ENCODE measurements at regions of chr10 and their contacts with region 1.

Region 1: DNA sequence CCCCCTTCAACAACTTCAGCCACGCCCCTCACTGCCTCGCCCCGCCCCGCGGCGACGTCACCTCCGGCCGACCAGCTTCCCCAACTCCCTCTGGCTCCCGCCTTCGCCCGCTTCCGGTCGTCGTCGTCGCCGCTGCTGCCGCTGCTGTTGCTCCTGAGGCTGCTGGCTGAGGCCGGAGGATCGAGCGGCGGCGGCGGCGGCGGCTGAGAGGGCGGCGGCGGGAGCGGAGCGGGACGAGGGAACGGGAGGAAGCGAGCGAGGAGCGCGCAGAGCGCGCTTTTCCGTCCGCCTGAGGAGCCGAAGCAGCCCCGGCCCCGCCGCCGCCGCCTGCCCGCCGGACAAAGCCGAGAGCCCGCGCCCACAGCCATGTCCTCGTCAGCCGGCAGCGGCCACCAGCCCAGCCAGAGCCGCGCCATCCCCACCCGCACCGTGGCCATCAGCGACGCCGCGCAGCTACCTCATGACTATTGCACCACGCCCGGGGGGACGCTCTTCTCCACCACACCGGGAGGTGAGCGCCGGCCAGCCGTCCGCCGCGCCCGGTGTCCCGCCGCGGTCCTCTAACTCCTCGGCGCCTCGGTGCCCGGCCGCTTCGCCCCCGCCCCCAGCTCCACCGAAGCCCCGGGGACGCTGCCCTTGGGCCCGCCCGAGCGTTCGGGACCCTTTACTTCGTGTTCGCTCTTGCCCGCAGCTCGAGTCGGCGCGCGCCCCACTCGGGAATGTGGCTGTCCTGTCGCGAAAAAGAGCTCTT is at the start of gene EIF4EBP2:
- DNase-seq: peak; percentile 97 to 99 (median 98)
- ATAC-seq: peak; percentile 93 to 96 (median 94)
- H3K4me3 ChIP-seq: peak within 1 kb of the TSS; percentile 61 to 99 (median 89)
- H3K27ac ChIP-seq: peak within 1 kb of the TSS; percentile 92 to 100 (median 98)
- H3K4me1 ChIP-seq: peaks cover 9 to 42% (median 28%) of the 10 kb centered on the region in 12 donors
- H3K27me3 ChIP-seq: no peaks in the 10 kb centered on the region
- CTCF ChIP-seq: peak in 1 of 12 donors; percentile 12
- POLR2A ChIP-seq: peak; percentile 81 to 97
- total RNA-seq, gene EIF4EBP2: 78.3 to 150 (median 89.7) TPM

Region 2: DNA sequence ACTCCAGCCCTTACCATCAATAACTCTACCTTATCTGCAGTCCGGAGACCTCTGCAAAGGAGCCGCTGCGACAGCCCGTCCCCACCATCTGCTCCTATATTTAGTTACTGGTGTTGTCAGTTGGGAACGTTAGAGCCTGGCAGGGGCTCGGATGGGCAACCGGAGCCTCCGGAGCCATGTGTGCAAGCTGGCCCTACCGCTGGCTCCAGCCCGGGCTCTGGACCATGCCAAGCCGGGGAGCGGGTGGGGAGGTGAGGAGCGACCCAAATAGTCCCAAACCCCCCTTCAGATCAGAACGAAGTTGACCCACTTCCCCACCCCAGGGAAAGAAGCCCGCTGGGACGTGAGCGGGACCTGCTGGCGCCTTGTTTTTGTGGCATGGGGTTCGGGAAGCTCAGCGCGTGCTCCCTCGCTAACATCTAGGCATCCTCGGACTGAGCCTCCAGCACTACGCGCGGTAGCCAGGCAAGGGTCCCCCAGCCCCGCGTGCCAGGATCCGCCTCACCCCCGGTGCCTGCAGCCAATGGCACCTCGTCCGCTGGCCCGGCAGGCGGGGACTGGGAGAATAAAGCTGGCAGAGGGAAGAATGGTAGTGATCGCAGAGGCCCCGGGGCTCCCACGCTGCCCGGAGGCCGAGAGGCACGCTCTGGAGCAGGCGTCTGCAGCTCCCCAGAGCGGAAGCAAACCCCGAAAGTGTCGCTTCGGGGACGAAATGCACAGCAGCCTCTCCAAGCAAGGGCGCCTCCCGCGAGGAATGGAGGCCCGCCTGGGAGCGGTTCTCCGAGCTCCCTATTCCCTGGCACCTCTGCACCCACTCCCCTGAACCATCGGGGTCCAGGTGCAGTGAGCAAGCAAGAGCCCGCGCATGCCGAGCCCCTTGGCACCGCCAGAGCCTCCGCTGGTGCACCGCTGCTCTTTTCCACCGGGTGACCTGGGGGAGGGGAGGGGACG is 22.5 kb before region 1 on chr10:
- intact Hi-C with region 1: loop called in 2 of 10 experiments (anchors 1 kb)
- DNase-seq: peak; percentile 60 to 84 (median 74)
- ATAC-seq: peak; percentile 66 to 80 (median 70)
- H3K4me3 ChIP-seq: peak overlapping the region; percentile 64 to 96 (median 78)
- H3K27ac ChIP-seq: peak overlapping the region; percentile 12 to 93 (median 84)
- H3K4me1 ChIP-seq: peaks cover 0 to 41% (median 17%) of the 10 kb centered on the region in 12 donors
- H3K27me3 ChIP-seq: no peaks in the 10 kb centered on the region
- CTCF ChIP-seq: no peak
- POLR2A ChIP-seq: no peak

Measured in heart left ventricle (tissue), 16 donors.